B cell (primary cell): ENCODE measurements at regions of chrX and their contacts with region 1.

Region 1: DNA sequence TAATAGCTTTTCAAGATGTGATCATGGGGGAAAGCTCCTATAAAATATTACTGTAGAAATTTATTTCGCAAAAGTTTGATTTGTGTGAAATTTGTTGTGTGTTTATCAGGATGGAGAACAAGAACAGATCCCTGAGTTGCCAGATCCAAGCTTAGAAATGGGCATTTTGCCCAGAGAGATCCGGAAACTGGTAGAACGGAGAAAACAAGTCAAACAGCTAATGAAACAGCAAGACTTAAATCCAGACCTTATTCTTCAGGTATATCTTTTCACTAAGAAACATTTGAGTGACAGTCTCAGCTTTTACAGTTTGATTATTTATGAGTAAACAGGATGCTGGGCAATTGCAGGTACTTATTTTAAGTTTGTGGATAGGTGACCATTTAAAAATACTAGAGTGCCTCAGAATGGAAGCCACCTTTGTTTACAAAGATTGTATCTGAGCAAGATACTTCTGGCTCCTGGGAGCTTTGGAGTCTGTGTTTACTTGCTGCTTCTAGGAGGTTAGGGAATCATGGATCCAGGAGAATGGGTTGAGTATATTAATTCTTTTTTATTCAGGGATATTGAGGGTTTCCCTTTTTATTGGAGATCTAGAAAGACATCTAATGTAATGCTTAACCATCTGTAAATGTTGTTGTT is 54.6 kb downstream of the POLA1 start:
- DNase-seq: no peak
- ATAC-seq: no peak
- H3K4me3 ChIP-seq: no peak overlapping the region
- H3K4me3 Mint-ChIP-seq: no peak overlapping the region
- H3K27ac ChIP-seq: no peak overlapping the region
- H3K27ac Mint-ChIP-seq: no peak overlapping the region
- H3K4me1 ChIP-seq: no peaks in the 10 kb centered on the region
- H3K4me1 Mint-ChIP-seq: no peaks in the 10 kb centered on the region
- H3K27me3 ChIP-seq: no peaks in the 10 kb centered on the region
- H3K27me3 Mint-ChIP-seq: no peaks in the 10 kb centered on the region
- CTCF ChIP-seq: no peak

Region 2: GRCh38 chrX:24668111-24668510 is 80.2 kb before region 1 on chrX:
- CTCF ChIA-PET with region 1: no interaction called
- POLR2A ChIA-PET with region 1: no interaction called
- intact Hi-C with region 1: no loop called
- DNase-seq: no peak
- ATAC-seq: no peak
- H3K4me3 ChIP-seq: no peak overlapping the region
- H3K4me3 Mint-ChIP-seq: no peak overlapping the region
- H3K27ac ChIP-seq: no peak overlapping the region
- H3K27ac Mint-ChIP-seq: no peak overlapping the region
- H3K4me1 ChIP-seq: no peaks in the 10 kb centered on the region
- H3K4me1 Mint-ChIP-seq: no peaks in the 10 kb centered on the region
- H3K27me3 ChIP-seq: no peaks in the 10 kb centered on the region
- H3K27me3 Mint-ChIP-seq: no peaks in the 10 kb centered on the region
- CTCF ChIP-seq: no peak

Region 3: GRCh38 chrX:24838629-24839028 is 90.3 kb after region 1 on chrX:
- CTCF ChIA-PET with region 1: interaction called, 13 read pairs
- POLR2A ChIA-PET with region 1: no interaction called
- intact Hi-C with region 1: no loop called
- DNase-seq: peak; percentile 20
- ATAC-seq: no peak
- H3K4me3 ChIP-seq: no peak overlapping the region
- H3K4me3 Mint-ChIP-seq: no peak overlapping the region
- H3K27ac ChIP-seq: no peak overlapping the region
- H3K27ac Mint-ChIP-seq: no peak overlapping the region
- H3K4me1 ChIP-seq: peaks cover 0 to 3% of the 10 kb centered on the region in 2 donors
- H3K4me1 Mint-ChIP-seq: peaks cover 4% of the 10 kb centered on the region
- H3K27me3 ChIP-seq: no peaks in the 10 kb centered on the region
- H3K27me3 Mint-ChIP-seq: no peaks in the 10 kb centered on the region
- CTCF ChIP-seq: peak; percentile 68

Region 4: DNA sequence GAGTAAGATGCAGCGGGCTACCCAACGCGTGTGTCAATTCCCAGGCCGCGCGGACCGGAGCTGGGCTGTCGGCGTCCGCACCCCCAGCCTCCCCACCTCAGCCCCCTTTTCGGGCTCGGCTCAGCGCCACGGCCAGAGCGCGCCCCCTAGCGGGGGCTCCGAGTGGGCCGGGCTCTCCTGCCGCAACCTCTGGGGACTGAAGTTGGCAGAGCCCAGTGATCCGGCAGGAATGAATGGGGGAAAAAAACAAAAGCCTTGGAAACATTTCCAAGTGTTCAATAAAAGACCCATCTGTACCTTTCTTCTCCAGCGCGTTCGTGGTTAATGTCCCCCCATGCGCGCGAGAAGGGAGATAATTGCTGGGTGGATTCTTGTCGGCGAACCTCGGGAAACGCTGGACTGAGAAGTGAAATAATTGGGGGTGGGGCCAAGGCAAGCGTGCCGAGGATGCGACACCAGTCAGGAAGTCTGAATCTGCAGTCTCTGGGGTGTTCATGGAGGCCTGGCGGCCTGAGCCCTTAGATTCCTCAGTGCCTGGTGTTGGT is 272.7 kb after region 1 on chrX:
- CTCF ChIA-PET with region 1: interaction called, 10 read pairs
- POLR2A ChIA-PET with region 1: no interaction called
- intact Hi-C with region 1: no loop called
- DNase-seq: no peak
- ATAC-seq: peak; percentile 47
- H3K4me3 ChIP-seq: peak overlapping the region in 2 of 5 experiments; percentile 12 to 17
- H3K4me3 Mint-ChIP-seq: peak overlapping the region; percentile 72
- H3K27ac ChIP-seq: no peak overlapping the region
- H3K27ac Mint-ChIP-seq: no peak overlapping the region
- H3K4me1 ChIP-seq: peaks cover 18 to 30% of the 10 kb centered on the region in 2 donors
- H3K4me1 Mint-ChIP-seq: peaks cover 25% of the 10 kb centered on the region
- H3K27me3 ChIP-seq: peaks cover 0 to 66% (median 40%) of the 10 kb centered on the region in 4 experiments
- H3K27me3 Mint-ChIP-seq: peaks cover 52% of the 10 kb centered on the region
- CTCF ChIP-seq: peak; percentile 59

Region 5: DNA sequence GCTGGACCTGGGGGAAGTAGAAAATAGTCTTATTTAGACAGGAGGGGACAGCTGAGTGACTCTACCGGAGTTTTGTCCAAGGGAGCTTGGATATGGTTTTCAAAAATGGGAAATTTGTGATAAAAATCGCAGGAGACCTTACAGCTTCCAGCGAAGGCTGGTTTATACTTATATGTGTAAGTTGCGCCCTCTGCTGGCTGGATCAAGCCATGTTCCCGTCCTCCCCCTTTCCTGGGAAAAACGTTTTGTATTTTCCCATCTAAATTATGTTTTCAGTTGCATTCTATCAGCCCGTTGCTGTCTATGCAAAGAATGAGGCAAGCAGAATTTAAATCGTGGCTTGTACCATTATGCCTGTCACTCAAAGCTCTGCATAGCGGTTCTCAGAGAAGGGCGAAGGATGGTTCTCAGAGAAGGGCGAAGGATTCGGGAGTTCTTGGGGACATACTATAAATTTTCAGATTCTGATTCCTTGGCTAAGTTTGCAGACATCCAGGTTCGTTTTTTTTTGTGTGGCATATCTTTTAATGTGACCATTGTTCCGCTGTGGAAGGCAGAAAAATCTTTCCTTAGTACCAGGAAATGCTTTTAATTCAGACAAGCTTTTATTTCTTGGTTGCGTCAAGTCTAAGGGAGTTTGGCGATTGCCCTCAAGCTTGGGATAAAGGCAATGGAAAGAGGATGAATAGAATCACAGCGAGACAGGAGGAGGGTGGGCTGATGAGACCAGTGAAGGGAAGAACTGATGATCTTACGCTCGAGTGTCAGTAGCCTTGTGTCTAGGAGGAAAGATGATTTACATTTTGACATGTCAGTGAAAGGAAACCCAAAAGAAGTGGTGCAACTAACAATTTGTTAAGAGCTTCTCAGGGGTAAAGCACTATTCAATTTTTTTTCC is 396.0 kb after region 1 on chrX:
- CTCF ChIA-PET with region 1: interaction called, 56 read pairs
- POLR2A ChIA-PET with region 1: no interaction called
- intact Hi-C with region 1: no loop called
- DNase-seq: peak; percentile 29
- ATAC-seq: no peak
- H3K4me3 ChIP-seq: no peak overlapping the region
- H3K4me3 Mint-ChIP-seq: no peak overlapping the region
- H3K27ac ChIP-seq: no peak overlapping the region
- H3K27ac Mint-ChIP-seq: no peak overlapping the region
- H3K4me1 ChIP-seq: no peaks in the 10 kb centered on the region
- H3K4me1 Mint-ChIP-seq: peaks cover 2% of the 10 kb centered on the region
- H3K27me3 ChIP-seq: no peaks in the 10 kb centered on the region
- H3K27me3 Mint-ChIP-seq: peaks cover 5% of the 10 kb centered on the region
- CTCF ChIP-seq: peak; percentile 68